ENCODE measurements at regions of chr4 and their contacts with region 1.

Region 1: GRCh38 chr4:148716431-148717052 is 274.3 kb upstream of the NR3C2 start:
- DNase-seq: no peak
- H3K4me3 ChIP-seq: no peak overlapping the region
- CTCF ChIP-seq: no peak

Region 2: GRCh38 chr4:148674876-148675275 is 41.7 kb before region 1 on chr4:
- in situ Hi-C with region 1: no loop called
- DNase-seq: no peak
- H3K4me3 ChIP-seq: no peak overlapping the region
- CTCF ChIP-seq: no peak

Region 3: GRCh38 chr4:148749403-148749802 is 32.9 kb after region 1 on chr4:
- in situ Hi-C with region 1: loop called (anchors 5 kb)
- DNase-seq: no peak
- H3K4me3 ChIP-seq: no peak overlapping the region
- CTCF ChIP-seq: no peak

Region 4: DNA sequence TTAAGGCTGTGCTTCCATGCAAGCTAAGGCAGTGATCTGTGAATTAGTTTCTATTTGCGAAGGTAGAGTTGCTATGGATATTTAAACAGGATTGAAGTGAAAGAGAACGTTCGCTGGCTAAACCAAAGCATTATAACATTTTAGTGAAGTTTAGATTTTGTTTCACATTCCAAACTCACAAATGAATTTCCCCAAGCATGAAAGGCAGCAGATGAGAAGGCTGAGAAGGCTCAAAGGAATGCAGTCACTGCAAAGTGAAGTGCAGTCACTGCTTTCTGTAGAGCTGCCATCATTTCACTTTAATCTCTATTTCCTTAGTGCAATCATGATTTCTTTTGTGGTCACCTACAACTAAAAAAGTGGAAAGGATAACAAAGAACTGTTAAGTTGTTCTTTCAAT is 60.4 kb after region 1 on chr4:
- in situ Hi-C with region 1: no loop called
- DNase-seq: peak; percentile 59
- H3K4me3 ChIP-seq: no peak overlapping the region
- CTCF ChIP-seq: no peak

Measured in astrocyte of the cerebellum (primary cell).